ENCODE measurements at regions of chr15 and their contacts with region 1.

Region 1: DNA sequence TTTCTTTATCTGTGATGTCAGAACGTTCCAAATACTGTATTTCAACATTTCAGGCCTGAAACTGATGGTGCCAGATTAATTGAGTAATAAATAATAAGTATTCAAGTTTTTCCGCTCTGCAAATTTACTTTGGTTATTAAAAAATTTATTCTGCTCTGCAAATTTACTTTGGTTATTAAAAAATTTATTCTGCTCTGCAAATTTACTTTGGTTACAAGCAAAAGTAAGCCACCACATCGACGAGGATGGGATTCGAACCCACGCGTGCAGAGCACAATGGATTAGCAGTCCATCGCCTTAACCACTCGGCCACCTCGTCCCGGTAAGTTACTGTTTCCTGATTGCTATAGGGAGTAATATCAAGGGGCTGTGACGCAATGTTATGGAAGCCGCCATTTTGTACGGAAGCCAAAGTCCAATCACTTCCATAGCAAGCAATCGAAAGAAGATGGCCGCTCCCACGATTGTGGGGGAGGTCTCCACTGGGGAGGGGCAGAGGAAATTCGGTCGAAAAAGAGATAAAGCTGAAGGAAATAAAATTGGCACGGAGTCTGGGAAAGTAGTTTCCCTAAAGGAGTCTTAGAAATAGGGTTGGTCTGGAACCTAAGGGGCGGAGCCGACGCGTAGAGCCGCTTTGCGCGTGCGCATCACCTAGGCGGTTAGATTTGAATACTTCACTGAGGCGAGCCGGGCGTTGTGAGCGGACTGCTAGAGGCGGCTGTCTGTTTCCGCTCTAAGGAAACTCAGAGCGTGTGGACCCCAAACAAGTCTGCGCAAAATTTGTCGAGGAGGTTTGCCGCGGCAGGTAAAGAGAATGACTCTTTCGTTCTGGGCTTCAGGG is at the start of gene KNL1:
- DNase-seq: peak; percentile 98
- H3K4me3 Mint-ChIP-seq: peak within 1 kb of the TSS; percentile 88
- H3K27ac Mint-ChIP-seq: peak within 1 kb of the TSS; percentile 95
- H3K4me1 Mint-ChIP-seq: peaks cover 36% of the 10 kb centered on the region
- H3K27me3 Mint-ChIP-seq: no peaks in the 10 kb centered on the region
- total RNA-seq, gene KNL1: 25.3 and 25.6 TPM in 2 replicates

Region 2: GRCh38 chr15:40266828-40267304 is 326.9 kb before region 1 on chr15:
- intact Hi-C with region 1: no loop called
- DNase-seq: no peak
- H3K4me3 Mint-ChIP-seq: no peak overlapping the region
- H3K27ac Mint-ChIP-seq: no peak overlapping the region
- H3K4me1 Mint-ChIP-seq: no peaks in the 10 kb centered on the region
- H3K27me3 Mint-ChIP-seq: peaks cover 14% of the 10 kb centered on the region

Region 3: DNA sequence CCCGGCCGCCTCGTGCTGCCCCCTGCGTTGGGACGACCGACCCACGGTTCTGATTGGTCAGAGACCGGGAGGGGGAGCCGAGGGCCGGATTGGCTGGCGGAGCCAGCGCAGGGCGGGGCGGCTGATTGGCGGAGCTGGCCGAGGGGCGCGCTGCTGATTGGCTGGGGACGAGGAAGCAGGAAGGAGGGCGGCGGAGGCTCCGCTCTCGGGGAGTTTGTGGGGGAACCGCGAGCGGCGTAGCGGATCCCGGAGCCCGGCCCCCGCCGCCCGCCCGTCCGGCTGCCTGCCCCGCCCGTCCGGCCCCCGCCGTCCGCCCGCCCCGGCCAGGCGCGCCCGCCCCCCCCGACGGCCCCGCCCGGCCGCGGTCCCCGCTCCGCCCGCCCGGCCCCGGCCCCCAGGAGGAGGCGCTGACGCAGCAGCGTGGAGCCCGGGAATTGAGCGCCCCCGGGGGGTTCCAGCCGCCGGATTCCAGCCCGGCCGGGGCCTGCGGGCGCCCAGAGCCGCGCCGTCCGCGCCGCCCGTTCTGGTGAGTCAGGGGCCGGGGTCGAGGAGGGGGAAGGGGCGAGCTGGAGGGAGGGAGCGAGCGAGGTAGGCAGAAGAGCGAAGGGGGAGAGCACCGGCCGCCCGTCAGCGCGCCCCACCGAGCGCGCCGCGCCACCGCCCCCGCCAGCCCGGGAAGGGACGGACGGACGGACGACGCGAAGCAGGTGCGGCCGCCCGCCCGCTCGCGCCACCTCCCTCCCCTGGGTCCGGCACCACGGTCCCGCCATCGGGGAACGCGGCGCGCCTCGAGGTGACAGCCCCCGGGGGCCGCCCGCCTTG is 152.9 kb before region 1 on chr15 and contains the start of gene BAHD1:
- intact Hi-C with region 1: no loop called
- DNase-seq: peak; percentile 99
- H3K4me3 Mint-ChIP-seq: peak within 1 kb of the TSS; percentile 97
- H3K27ac Mint-ChIP-seq: peak within 1 kb of the TSS; percentile 87
- H3K4me1 Mint-ChIP-seq: peaks cover 42% of the 10 kb centered on the region
- H3K27me3 Mint-ChIP-seq: peaks cover 56% of the 10 kb centered on the region
- total RNA-seq, gene BAHD1: 23.9 and 26.2 TPM in 2 replicates

Region 4: GRCh38 chr15:40763801-40764732 is 170.3 kb after region 1 on chr15 and contains the start of gene GCHFR:
- intact Hi-C with region 1: loop called (anchors 10 kb)
- DNase-seq: peak; percentile 94
- H3K4me3 Mint-ChIP-seq: peak within 1 kb of the TSS; percentile 76
- H3K27ac Mint-ChIP-seq: peak within 1 kb of the TSS; percentile 89
- H3K4me1 Mint-ChIP-seq: peaks cover 27% of the 10 kb centered on the region
- H3K27me3 Mint-ChIP-seq: peaks cover 2% of the 10 kb centered on the region
- total RNA-seq, gene GCHFR: 34.7 and 37.2 TPM in 2 replicates

Measured in activated CD4-positive, alpha-beta T cell treated with anti-CD3 and anti-CD28 coated beads, Interleukin-2, amount 10 ng/mL, durations not matched to agents 24 days and 14 days (primary cell).